Posterior vena cava (tissue), 2 donors: ENCODE measurements at regions of chr3 and their contacts with region 1.

Region 1: DNA sequence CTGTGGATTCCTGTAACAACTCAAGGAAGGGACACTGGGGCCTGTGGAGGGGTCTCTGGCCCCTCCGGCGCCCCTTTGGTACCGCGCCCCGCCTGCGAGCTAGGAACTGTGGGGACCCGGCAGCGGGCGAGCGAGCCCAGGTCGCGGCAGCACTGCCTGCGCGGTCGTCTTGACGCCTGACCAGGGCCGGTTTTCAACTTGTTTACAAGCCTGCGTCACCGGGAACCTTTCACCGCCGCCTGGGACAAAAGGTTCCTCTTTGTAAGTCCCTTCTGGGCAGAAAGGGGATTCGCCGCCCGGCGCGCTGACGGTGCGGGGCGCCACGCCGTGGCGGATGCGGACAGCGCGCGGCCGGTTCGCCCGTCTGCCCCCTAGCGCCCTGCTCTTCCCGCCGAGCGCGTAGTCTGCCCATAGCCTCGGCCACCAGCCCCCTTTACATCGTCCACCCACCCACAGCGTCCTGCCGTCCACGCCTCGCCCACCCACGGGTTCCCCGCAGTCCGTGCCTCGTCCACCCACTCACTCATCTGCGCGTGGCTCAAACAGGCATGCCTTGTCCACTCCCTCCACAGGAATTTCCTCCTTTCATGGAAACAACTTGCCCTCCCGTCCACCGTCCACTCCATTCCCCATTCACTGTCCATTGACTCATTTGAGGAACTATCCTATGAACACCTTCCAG is 5.5 kb upstream of the CFAP100 start:
- DNase-seq: peak; percentile 98

Region 2: GRCh38 chr3:126245811-126246727 is 143.2 kb before region 1 on chr3:
- intact Hi-C with region 1: loop called in 1 of 2 experiments (anchors 2 kb)
- DNase-seq: peak; percentile 82